ENCODE measurements at regions of chr11 and their contacts with region 1.

Region 1: GRCh38 chr11:73141848-73142286 is 251 bp downstream of the FCHSD2 start:
- DNase-seq: peak; percentile 73
- ATAC-seq: peak; percentile 17
- H3K4me3 Mint-ChIP-seq: peak overlapping the region; percentile 92
- H3K27ac Mint-ChIP-seq: peak overlapping the region; percentile 82
- H3K4me1 Mint-ChIP-seq: peaks cover 40% of the 10 kb centered on the region
- H3K27me3 Mint-ChIP-seq: no peaks in the 10 kb centered on the region

Region 2: GRCh38 chr11:73034777-73035176 is 107.1 kb before region 1 on chr11:
- CTCF ChIA-PET with region 1: interaction called, 4 read pairs
- POLR2A ChIA-PET with region 1: no interaction called
- intact Hi-C with region 1: loop called (anchors 1 to 2 kb)
- DNase-seq: peak; percentile 22
- ATAC-seq: peak; percentile 86
- H3K4me3 Mint-ChIP-seq: no peak overlapping the region
- H3K27ac Mint-ChIP-seq: peak overlapping the region; percentile 72
- H3K4me1 Mint-ChIP-seq: peaks cover 30% of the 10 kb centered on the region
- H3K27me3 Mint-ChIP-seq: no peaks in the 10 kb centered on the region